H1 (cell line): ENCODE measurements at regions of chr17 and their contacts with region 1.

Region 1: DNA sequence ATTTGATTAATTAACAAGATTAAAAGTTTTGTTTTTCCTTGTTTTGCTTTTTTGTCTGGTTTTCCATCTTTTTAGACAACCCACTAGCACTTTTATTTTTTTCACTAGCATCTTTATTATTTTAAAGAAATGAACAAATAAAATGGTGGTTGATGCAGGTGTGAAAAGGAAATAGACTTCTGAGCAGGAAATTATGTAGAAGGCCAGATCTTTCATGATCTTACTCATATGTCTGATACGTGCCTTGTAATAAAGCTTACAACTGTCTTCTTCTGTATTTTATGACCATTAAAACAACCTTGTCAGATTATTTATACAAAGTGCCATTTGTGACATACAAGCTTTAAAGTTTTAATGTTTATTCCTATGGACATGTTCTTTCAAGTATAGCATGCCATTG is 6.3 kb downstream of the SLFN12L start:
- DNase-seq: no peak
- H3K4me3 ChIP-seq: no peak overlapping the region
- H3K27ac ChIP-seq: no peak overlapping the region
- H3K4me1 ChIP-seq: no peaks in the 10 kb centered on the region
- H3K27me3 ChIP-seq: no peaks in the 10 kb centered on the region
- CTCF ChIP-seq: no peak
- EP300 ChIP-seq: no peak
- POLR2A ChIP-seq: no peak
- RAD21 ChIP-seq: no peak

Region 2: DNA sequence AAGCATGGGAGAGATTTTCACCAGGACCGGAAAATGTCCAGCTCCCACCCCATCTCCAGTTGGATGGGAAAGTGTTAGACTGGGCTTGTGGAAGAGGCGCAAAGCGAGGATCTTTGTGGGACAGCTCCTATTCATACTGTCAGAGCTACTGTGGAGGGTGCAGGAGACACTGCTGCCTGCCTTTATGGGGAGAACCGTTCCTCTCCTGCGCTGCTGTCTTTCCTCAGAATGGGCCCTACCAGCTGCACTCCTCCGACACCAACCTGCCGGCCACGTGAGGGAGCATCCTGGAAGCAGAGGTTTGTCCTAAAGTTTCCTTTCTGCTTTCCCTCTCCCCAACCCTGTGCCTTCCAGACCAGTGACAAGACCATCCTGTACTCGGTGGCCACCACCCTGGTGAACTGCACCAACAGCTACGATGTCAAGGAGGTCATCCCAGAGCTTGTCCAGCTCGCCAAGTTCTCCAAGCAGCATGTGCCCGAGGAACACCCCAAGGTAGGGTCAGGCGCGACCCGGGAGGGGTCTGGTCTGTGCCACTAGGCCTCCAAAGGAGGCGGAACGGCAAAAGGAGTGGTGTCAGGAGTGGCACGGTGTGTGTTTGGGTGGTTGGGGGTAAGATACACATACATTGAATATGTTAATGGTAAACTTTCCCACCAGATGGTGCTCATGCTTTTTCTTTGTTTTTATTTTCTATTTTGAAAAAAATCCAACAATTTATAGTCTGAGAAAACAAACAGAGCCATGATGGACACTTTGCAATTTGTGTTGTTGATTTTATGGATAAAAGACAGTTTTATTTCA is 360.0 kb before region 1 on chr17:
- CTCF ChIA-PET with region 1: interaction called, 10 read pairs
- POLR2A ChIA-PET with region 1: no interaction called
- DNase-seq: no peak
- H3K4me3 ChIP-seq: no peak overlapping the region
- H3K27ac ChIP-seq: no peak overlapping the region
- H3K4me1 ChIP-seq: no peaks in the 10 kb centered on the region; a peak in 1 of 7 replicates
- H3K27me3 ChIP-seq: no peaks in the 10 kb centered on the region; a peak in 1 of 7 replicates
- CTCF ChIP-seq: peak in 1 of 3 experiments; percentile 3; a peak in 2 of 4 replicates
- EP300 ChIP-seq: no peak
- POLR2A ChIP-seq: no peak
- RAD21 ChIP-seq: peak; percentile 28 to 43